Activated B cell treated with CpG ODN at 0.5 μM for 24 hours (primary cell): ENCODE measurements at regions of chr7 and their contacts with region 1.

Region 1: GRCh38 chr7:140230861-140231770 is 54.3 kb upstream of the KDM7A start:
- DNase-seq: no peak
- ATAC-seq: peak; percentile 30
- H3K4me3 Mint-ChIP-seq: peak overlapping the region; percentile 91
- H3K27ac Mint-ChIP-seq: peak overlapping the region; percentile 95
- H3K4me1 Mint-ChIP-seq: peaks cover 59% of the 10 kb centered on the region
- H3K27me3 Mint-ChIP-seq: no peaks in the 10 kb centered on the region
- CTCF ChIP-seq: no peak

Region 2: DNA sequence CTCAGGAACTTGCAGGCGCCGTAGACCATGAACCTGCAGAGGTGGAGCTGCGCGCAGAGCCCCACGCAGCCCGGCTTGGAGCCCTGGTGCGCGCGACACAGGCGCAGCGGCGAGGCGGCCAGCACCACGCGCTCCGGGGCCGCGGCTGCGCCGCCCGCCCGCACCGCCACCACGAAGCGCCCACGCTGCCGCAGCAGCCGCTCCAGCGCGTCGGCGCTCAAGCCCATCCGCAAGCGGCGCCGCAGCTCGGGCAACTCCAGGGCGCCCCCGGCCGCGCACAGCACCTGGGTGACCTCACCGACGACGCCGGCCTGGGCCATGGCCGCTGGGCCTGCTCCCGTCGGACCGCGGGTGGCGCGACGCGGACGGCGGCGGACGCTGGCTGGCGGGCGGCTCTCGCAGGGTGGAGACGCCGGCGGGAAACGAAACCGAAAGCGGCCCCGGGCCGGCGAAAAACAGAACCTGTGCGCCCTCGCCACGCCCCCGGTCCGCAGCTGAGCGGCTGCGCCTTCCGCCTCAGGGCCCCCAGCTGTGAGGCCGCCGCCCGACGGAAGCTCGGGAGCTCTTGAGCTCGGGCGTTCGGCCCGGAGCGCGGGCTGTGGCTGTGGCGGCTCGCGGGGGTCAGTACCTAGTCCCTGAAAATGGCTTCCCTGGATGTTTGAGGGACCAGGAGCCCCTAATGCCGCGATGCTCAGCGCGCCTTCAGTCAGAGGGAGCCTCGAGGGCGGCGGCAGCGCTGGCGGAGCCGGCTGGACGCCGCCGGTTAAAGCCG is 168.4 kb before region 1 on chr7 and contains the start of gene PARP12:
- CTCF ChIA-PET with region 1: no interaction called
- POLR2A ChIA-PET with region 1: interaction called, 10 read pairs
- intact Hi-C with region 1: loop called (anchors 2 kb)
- DNase-seq: peak; percentile 93
- ATAC-seq: peak; percentile 81
- H3K4me3 Mint-ChIP-seq: peak within 1 kb of the TSS; percentile 97
- H3K27ac Mint-ChIP-seq: peak within 1 kb of the TSS; percentile 98
- H3K4me1 Mint-ChIP-seq: peaks cover 47% of the 10 kb centered on the region
- H3K27me3 Mint-ChIP-seq: no peaks in the 10 kb centered on the region
- CTCF ChIP-seq: no peak
- total RNA-seq, gene PARP12: 104 and 128 TPM in 2 replicates

Region 3: GRCh38 chr7:140242057-140243031 is 11.2 kb after region 1 on chr7:
- CTCF ChIA-PET with region 1: no interaction called
- POLR2A ChIA-PET with region 1: interaction called, 3 read pairs
- intact Hi-C with region 1: loop called (anchors 1 kb)
- DNase-seq: no peak
- ATAC-seq: peak; percentile 57
- H3K4me3 Mint-ChIP-seq: peak overlapping the region; percentile 56
- H3K27ac Mint-ChIP-seq: peak overlapping the region; percentile 69
- H3K4me1 Mint-ChIP-seq: peaks cover 21% of the 10 kb centered on the region
- H3K27me3 Mint-ChIP-seq: no peaks in the 10 kb centered on the region
- CTCF ChIP-seq: no peak

Region 4: DNA sequence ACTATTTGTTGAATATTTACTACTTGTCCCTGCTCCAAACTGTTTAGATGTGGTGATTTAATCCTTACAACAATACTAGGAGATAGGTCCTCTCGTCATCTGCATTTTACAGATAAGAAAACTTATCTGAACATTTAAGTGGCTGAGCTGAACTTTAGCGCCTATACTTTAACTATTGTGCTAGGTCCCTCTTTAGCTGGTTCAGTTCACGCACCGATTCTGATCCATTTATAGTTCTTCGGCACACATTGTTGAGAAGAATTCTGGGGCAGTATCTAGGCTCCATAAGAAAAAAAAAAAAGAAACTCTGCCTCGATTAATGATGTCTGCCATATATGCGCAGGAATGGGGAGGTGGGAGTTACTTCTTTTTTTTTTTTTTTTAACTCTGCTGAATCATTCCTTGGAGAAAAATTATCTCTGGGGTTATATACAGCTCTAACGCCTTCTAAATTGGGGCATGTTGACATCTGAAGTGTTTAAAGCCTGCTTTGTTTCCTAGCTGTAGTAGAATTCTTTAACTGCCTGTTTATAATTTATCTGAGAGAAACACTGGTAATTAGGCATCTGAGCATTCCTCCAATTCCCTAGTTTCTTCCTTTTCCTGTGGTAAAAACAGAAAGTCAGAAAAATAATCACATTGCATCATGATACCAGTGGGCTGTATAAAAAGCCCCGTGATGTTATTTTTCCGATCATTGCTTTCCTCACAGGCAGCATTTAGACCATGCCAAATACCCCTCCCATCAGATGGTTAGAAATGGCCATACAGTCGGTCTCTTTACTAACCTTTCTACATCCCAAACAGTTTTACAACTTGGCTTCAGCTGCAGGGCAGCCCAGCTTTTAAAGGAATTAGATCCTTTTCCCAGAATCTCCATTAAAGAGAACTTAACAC is 44.2 kb after region 1 on chr7:
- CTCF ChIA-PET with region 1: no interaction called
- POLR2A ChIA-PET with region 1: interaction called, 11 read pairs
- intact Hi-C with region 1: no loop called
- DNase-seq: no peak
- ATAC-seq: no peak
- H3K4me3 Mint-ChIP-seq: no peak overlapping the region
- H3K27ac Mint-ChIP-seq: no peak overlapping the region
- H3K4me1 Mint-ChIP-seq: no peaks in the 10 kb centered on the region
- H3K27me3 Mint-ChIP-seq: no peaks in the 10 kb centered on the region
- CTCF ChIP-seq: no peak

Region 5: DNA sequence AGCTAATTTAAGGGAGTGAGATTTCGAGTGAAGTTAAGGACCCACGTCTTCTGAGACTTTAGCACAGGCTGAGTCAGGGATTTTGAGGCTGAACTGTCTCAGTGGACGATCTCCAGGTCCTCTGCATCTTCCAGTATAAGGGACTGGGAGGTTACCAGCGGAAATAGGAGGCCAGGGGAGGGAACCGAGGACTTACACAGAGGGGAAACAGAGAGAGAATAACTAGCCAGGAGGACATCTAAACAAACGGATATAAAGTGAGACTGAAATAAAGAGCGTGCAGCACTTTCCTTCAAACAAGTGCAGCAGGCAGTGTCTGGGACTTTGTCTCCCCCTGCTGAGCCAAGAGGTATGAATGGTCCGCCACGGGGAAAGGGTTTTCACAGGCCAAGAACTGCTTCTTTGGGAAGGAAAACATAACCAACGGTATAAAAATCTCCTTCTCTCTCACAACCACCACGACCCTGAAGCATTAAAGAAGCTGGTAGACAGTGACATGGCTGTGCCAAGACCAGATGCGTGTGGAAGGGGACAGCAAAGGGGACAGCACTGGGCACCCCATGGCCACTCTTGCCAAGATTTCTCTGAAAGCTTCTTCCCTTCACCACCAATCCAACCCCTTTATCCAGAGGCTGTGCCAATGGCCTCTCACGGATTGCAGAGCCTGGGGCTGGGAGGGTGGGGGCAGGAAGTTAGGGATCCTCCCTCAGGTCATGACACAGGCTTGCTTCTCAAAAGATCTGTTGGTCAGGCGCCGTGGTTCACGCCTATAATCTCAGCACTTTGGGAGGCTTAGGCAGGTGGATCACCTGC is 95.2 kb after region 1 on chr7:
- CTCF ChIA-PET with region 1: no interaction called
- POLR2A ChIA-PET with region 1: no interaction called
- intact Hi-C with region 1: loop called (anchors 1 kb)
- DNase-seq: peak; percentile 21
- ATAC-seq: peak; percentile 75
- H3K4me3 Mint-ChIP-seq: no peak overlapping the region
- H3K27ac Mint-ChIP-seq: no peak overlapping the region
- H3K4me1 Mint-ChIP-seq: no peaks in the 10 kb centered on the region
- H3K27me3 Mint-ChIP-seq: no peaks in the 10 kb centered on the region
- CTCF ChIP-seq: no peak

Region 6: DNA sequence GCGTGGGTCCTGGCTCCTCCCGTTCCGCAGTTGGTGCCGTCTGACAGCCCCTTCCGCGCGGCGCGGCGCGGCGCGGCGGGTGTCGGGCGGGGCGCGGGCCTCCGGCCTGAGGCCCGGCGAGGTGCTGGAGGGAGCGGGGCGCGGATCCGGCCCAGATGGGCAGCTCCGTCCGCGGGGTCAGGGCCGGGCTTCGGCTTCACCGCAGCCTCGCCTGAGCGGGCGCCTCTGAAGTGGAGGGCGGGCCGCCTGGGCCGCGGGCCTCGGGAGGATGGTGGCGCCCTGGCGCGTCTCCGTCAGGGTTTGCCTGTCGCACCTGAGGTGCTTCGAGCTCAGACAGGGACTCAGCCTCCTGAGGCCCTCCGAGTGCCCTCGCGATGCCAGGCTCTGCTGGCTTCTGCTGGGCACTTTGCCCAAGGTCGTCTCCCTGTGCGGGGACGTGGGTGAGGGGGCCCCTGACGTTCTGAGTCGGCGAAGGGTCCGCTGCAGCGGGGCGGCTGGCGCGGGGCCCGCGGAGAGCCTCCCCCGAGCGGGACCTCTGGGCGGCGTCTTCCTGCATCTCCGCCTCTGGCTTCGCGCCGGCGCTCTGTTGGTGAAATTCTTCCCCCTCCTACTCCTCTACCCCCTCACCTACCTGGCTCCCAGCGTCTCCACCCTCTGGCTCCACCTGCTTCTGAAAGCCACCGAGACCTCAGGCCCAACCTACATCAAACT is 442.1 kb after region 1 on chr7:
- CTCF ChIA-PET with region 1: no interaction called
- POLR2A ChIA-PET with region 1: no interaction called
- intact Hi-C with region 1: loop called (anchors 1 kb)
- DNase-seq: peak; percentile 67
- ATAC-seq: peak; percentile 58
- H3K4me3 Mint-ChIP-seq: peak overlapping the region; percentile 88
- H3K27ac Mint-ChIP-seq: peak overlapping the region; percentile 86
- H3K4me1 Mint-ChIP-seq: peaks cover 57% of the 10 kb centered on the region
- H3K27me3 Mint-ChIP-seq: no peaks in the 10 kb centered on the region
- CTCF ChIP-seq: no peak